CD8-positive, alpha-beta T cell (primary cell): ENCODE measurements at regions of chr12 and their contacts with region 1.

Region 1: DNA sequence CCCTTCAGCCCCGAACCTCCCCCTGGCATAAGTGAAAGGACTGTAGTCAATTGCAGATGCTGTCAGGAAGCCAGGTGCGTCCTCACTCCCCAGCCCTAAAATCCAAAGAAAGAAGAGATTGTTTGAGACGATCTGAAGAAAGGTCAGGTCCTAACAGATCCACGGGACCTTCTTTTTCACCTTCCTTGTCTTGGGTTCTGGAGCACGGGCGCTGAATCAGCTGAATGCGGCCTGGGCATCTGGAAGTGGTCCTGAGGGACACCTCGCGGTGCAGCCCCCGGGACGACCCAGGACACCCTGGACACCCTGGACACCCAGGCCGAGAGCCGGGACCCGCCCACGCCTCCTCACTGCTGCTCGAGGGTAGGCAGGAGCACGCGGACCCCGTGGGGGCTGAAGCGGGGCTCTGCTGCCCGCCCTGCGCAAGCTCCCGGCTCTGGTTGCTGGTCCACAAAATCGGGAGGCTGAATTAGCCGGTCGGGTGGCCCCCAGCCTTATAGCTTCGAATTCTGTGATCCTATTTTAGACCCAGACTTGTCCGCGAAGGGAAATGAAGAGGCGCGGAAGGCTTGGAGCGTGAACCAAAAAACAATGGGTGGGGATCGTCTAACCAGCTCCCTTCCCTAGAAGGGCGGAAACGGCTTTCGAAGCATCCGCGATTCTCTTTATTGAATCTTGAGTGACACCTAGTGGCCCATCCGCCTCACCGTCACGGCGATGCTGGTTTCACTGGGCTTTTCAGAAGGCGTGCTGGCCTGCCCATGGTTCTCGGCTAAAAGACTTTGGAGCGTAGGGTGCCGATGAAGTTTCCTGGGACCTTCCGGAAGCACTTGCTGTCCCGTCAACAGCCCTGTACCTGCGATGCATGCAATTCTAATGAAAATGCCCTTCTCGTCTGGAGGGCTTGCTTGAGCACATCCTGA is 46.4 kb upstream of the PLXNC1 start:
- DNase-seq: peak; percentile 71 to 91 (median 84)
- ATAC-seq: peak; percentile 86
- H3K4me3 ChIP-seq: peak overlapping the region; percentile 58 to 70
- H3K4me3 Mint-ChIP-seq: peak overlapping the region; percentile 87
- H3K27ac ChIP-seq: no peak overlapping the region
- H3K27ac Mint-ChIP-seq: peak overlapping the region; percentile 52
- H3K4me1 ChIP-seq: peaks cover 2% of the 10 kb centered on the region
- H3K4me1 Mint-ChIP-seq: peaks cover 11% of the 10 kb centered on the region
- H3K27me3 ChIP-seq: no peaks in the 10 kb centered on the region
- H3K27me3 Mint-ChIP-seq: peaks cover 33% of the 10 kb centered on the region
- CTCF ChIP-seq: peak; percentile 69

Region 2: DNA sequence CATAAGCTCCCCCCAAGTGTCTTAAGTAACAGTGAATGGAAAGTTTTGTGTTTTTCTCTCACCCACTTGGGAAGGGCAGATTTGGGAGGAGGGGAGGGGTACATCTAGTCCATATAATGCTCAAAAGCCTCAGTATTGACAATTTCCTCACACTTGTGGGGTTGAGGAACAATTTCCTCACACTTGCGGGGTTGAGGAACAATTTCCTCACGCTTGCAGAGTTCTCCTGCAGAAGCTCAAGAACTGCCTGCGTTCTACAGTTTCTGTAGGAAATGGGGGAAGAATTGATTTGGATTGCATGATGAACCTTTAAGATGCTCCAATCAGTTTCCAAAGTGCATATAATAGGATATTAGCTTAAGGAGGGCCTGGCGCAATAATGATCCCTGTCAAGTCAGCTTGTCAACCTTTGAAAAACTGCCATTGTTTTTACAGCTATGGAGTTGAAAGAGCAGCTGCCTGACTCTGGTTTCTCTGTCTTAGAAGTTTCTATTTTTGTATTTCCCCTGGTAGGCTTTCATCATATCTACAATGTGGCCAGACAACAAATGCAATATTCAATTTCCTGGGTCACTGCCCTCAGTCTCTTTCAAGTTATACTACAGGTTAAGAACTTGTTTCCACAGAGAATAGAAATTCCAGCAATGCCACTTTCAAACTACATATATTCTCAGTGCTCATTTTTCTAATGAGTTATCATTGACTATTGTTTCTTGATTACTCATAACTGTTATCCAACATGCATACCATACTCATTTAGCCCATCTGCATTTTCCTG is 1332.7 kb before region 1 on chr12:
- CTCF ChIA-PET with region 1: no interaction called
- POLR2A ChIA-PET with region 1: no interaction called
- intact Hi-C with region 1: no loop called
- DNase-seq: peak in 1 of 9 experiments; percentile 11
- ATAC-seq: no peak
- H3K4me3 ChIP-seq: no peak overlapping the region
- H3K4me3 Mint-ChIP-seq: peak overlapping the region; percentile 16
- H3K27ac ChIP-seq: no peak overlapping the region
- H3K27ac Mint-ChIP-seq: peak overlapping the region; percentile 4
- H3K4me1 ChIP-seq: peaks cover 16% of the 10 kb centered on the region
- H3K4me1 Mint-ChIP-seq: peaks cover 31% of the 10 kb centered on the region
- H3K27me3 ChIP-seq: no peaks in the 10 kb centered on the region
- H3K27me3 Mint-ChIP-seq: no peaks in the 10 kb centered on the region
- CTCF ChIP-seq: no peak

Region 3: GRCh38 chr12:92987362-92987761 is 1114.6 kb before region 1 on chr12:
- CTCF ChIA-PET with region 1: interaction called, 53 read pairs
- POLR2A ChIA-PET with region 1: no interaction called
- intact Hi-C with region 1: loop called (anchors 1 to 2 kb)
- DNase-seq: peak in 2 of 9 experiments; percentile 60 to 69
- ATAC-seq: peak; percentile 63
- H3K4me3 ChIP-seq: no peak overlapping the region
- H3K4me3 Mint-ChIP-seq: no peak overlapping the region
- H3K27ac ChIP-seq: no peak overlapping the region
- H3K27ac Mint-ChIP-seq: no peak overlapping the region
- H3K4me1 ChIP-seq: no peaks in the 10 kb centered on the region
- H3K4me1 Mint-ChIP-seq: peaks cover 9% of the 10 kb centered on the region
- H3K27me3 ChIP-seq: no peaks in the 10 kb centered on the region
- H3K27me3 Mint-ChIP-seq: no peaks in the 10 kb centered on the region
- CTCF ChIP-seq: peak; percentile 62

Region 4: GRCh38 chr12:93497456-93497855 is 604.5 kb before region 1 on chr12:
- CTCF ChIA-PET with region 1: interaction called, 379 read pairs
- POLR2A ChIA-PET with region 1: interaction called, 22 read pairs
- intact Hi-C with region 1: no loop called
- DNase-seq: no peak
- ATAC-seq: no peak
- H3K4me3 ChIP-seq: no peak overlapping the region
- H3K4me3 Mint-ChIP-seq: no peak overlapping the region
- H3K27ac ChIP-seq: no peak overlapping the region
- H3K27ac Mint-ChIP-seq: peak overlapping the region; percentile 75
- H3K4me1 ChIP-seq: no peaks in the 10 kb centered on the region
- H3K4me1 Mint-ChIP-seq: no peaks in the 10 kb centered on the region
- H3K27me3 ChIP-seq: no peaks in the 10 kb centered on the region
- H3K27me3 Mint-ChIP-seq: no peaks in the 10 kb centered on the region
- CTCF ChIP-seq: no peak

Region 5: DNA sequence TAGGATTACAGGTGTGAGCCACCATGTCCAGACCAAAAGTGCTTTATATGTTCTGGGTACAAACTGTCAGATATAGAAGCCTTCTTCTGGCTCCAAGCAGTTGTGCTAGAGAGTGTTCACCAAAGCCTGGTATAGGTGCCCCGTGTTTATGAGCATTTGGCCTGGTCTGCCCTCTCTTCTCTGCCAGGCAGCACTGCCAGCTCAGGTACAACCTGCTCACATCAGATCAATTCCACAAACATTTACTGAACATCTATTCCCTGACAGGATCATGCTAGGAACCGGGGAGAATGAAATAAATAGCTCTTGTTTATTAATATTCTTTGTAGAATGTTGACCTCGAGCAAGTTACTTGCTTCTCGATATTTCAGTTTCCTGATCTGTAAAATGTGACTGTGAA is 549.6 kb before region 1 on chr12:
- CTCF ChIA-PET with region 1: interaction called, 13 read pairs
- POLR2A ChIA-PET with region 1: no interaction called
- intact Hi-C with region 1: no loop called
- DNase-seq: no peak
- ATAC-seq: no peak
- H3K4me3 ChIP-seq: no peak overlapping the region
- H3K4me3 Mint-ChIP-seq: no peak overlapping the region
- H3K27ac ChIP-seq: no peak overlapping the region
- H3K27ac Mint-ChIP-seq: no peak overlapping the region
- H3K4me1 ChIP-seq: no peaks in the 10 kb centered on the region
- H3K4me1 Mint-ChIP-seq: no peaks in the 10 kb centered on the region
- H3K27me3 ChIP-seq: no peaks in the 10 kb centered on the region
- H3K27me3 Mint-ChIP-seq: no peaks in the 10 kb centered on the region
- CTCF ChIP-seq: no peak

Region 6: GRCh38 chr12:93742110-93742934 is 359.7 kb before region 1 on chr12:
- CTCF ChIA-PET with region 1: interaction called, 4 read pairs
- POLR2A ChIA-PET with region 1: no interaction called
- intact Hi-C with region 1: loop called in 1 of 2 experiments (anchors 5 kb)
- DNase-seq: peak; percentile 10 to 72 (median 45)
- ATAC-seq: peak; percentile 87
- H3K4me3 ChIP-seq: peak overlapping the region; percentile 56 to 76
- H3K4me3 Mint-ChIP-seq: peak overlapping the region; percentile 91
- H3K27ac ChIP-seq: peak overlapping the region; percentile 34 to 47
- H3K27ac Mint-ChIP-seq: peak overlapping the region; percentile 79
- H3K4me1 ChIP-seq: peaks cover 8% of the 10 kb centered on the region
- H3K4me1 Mint-ChIP-seq: peaks cover 28% of the 10 kb centered on the region
- H3K27me3 ChIP-seq: no peaks in the 10 kb centered on the region
- H3K27me3 Mint-ChIP-seq: no peaks in the 10 kb centered on the region
- CTCF ChIP-seq: no peak

Region 7: DNA sequence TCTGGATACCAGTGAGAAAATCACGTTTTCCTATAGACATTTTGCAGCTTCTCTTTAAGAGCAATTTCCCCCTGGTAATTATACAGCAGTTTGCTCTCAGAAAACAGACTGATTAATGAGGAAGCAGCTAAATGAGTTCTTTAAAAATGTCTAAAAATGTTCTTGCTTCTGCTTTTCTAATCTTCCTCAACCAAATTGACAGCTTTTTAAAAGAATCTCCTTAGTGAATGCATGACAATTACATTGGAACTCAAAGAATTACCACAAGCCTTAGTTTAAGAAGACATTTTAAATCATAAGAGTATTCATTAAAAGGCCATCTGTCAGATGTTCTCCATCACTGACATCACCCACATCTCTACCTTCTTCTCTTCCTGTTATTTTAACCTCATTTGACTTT is 89.4 kb before region 1 on chr12:
- CTCF ChIA-PET with region 1: interaction called, 17 read pairs
- POLR2A ChIA-PET with region 1: no interaction called
- intact Hi-C with region 1: no loop called
- DNase-seq: no peak
- ATAC-seq: no peak
- H3K4me3 ChIP-seq: no peak overlapping the region
- H3K4me3 Mint-ChIP-seq: no peak overlapping the region
- H3K27ac ChIP-seq: no peak overlapping the region
- H3K27ac Mint-ChIP-seq: no peak overlapping the region
- H3K4me1 ChIP-seq: peaks cover 6% of the 10 kb centered on the region
- H3K4me1 Mint-ChIP-seq: peaks cover 14% of the 10 kb centered on the region
- H3K27me3 ChIP-seq: no peaks in the 10 kb centered on the region
- H3K27me3 Mint-ChIP-seq: no peaks in the 10 kb centered on the region
- CTCF ChIP-seq: no peak

Region 8: GRCh38 chr12:94126067-94126466 is 24.1 kb after region 1 on chr12:
- CTCF ChIA-PET with region 1: interaction called, 36 read pairs
- POLR2A ChIA-PET with region 1: no interaction called
- intact Hi-C with region 1: no loop called
- DNase-seq: peak in 1 of 9 experiments; percentile 27
- ATAC-seq: no peak
- H3K4me3 ChIP-seq: no peak overlapping the region
- H3K4me3 Mint-ChIP-seq: no peak overlapping the region
- H3K27ac ChIP-seq: no peak overlapping the region
- H3K27ac Mint-ChIP-seq: peak overlapping the region; percentile 28
- H3K4me1 ChIP-seq: peaks cover 46% of the 10 kb centered on the region
- H3K4me1 Mint-ChIP-seq: peaks cover 49% of the 10 kb centered on the region
- H3K27me3 ChIP-seq: no peaks in the 10 kb centered on the region
- H3K27me3 Mint-ChIP-seq: no peaks in the 10 kb centered on the region
- CTCF ChIP-seq: no peak

Region 9: GRCh38 chr12:94553130-94553519 is 451.1 kb after region 1 on chr12:
- CTCF ChIA-PET with region 1: no interaction called
- POLR2A ChIA-PET with region 1: no interaction called
- intact Hi-C with region 1: no loop called
- DNase-seq: no peak
- ATAC-seq: no peak
- H3K4me3 ChIP-seq: no peak overlapping the region
- H3K4me3 Mint-ChIP-seq: no peak overlapping the region
- H3K27ac ChIP-seq: no peak overlapping the region
- H3K27ac Mint-ChIP-seq: no peak overlapping the region
- H3K4me1 ChIP-seq: no peaks in the 10 kb centered on the region
- H3K4me1 Mint-ChIP-seq: no peaks in the 10 kb centered on the region
- H3K27me3 ChIP-seq: no peaks in the 10 kb centered on the region
- H3K27me3 Mint-ChIP-seq: peaks cover 11% of the 10 kb centered on the region
- CTCF ChIP-seq: no peak